ENCODE measurements at regions of chr1 and their contacts with region 1.

Region 1: DNA sequence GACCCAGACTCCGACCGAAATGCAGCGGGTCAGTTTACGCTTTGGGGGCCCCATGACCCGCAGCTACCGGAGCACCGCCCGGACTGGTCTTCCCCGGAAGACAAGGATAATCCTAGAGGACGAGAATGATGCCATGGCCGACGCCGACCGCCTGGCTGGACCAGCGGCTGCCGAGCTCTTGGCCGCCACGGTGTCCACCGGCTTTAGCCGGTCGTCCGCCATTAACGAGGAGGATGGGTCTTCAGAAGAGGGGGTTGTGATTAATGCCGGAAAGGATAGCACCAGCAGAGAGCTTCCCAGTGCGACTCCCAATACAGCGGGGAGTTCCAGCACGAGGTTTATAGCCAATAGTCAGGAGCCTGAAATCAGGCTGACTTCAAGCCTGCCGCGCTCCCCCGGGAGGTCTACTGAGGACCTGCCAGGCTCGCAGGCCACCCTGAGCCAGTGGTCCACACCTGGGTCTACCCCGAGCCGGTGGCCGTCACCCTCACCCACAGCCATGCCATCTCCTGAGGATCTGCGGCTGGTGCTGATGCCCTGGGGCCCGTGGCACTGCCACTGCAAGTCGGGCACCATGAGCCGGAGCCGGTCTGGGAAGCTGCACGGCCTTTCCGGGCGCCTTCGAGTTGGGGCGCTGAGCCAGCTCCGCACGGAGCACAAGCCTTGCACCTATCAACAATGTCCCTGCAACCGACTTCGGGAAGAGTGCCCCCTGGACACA is 534 bp downstream of the C1orf56 start:
- DNase-seq: peak; percentile 72 to 87 (median 85)
- H3K4me3 ChIP-seq: peak overlapping the region; percentile 56 to 92 (median 80)
- H3K27ac ChIP-seq: peak overlapping the region in 1 of 2 experiments; percentile 49
- H3K4me1 ChIP-seq: peaks cover 2 to 18% (median 9%) of the 10 kb centered on the region in 4 experiments
- H3K27me3 ChIP-seq: no peaks in the 10 kb centered on the region

Region 2: GRCh38 chr1:151036363-151036762 is 11.7 kb before region 1 on chr1 and contains the start of gene BNIPL:
- CTCF ChIA-PET with region 1: interaction called, 15 read pairs
- POLR2A ChIA-PET with region 1: no interaction called
- DNase-seq: no peak
- H3K4me3 ChIP-seq: no peak within 1 kb of the TSS
- H3K27ac ChIP-seq: no peak within 1 kb of the TSS
- H3K4me1 ChIP-seq: no peaks in the 10 kb centered on the region
- H3K27me3 ChIP-seq: no peaks in the 10 kb centered on the region

Region 3: DNA sequence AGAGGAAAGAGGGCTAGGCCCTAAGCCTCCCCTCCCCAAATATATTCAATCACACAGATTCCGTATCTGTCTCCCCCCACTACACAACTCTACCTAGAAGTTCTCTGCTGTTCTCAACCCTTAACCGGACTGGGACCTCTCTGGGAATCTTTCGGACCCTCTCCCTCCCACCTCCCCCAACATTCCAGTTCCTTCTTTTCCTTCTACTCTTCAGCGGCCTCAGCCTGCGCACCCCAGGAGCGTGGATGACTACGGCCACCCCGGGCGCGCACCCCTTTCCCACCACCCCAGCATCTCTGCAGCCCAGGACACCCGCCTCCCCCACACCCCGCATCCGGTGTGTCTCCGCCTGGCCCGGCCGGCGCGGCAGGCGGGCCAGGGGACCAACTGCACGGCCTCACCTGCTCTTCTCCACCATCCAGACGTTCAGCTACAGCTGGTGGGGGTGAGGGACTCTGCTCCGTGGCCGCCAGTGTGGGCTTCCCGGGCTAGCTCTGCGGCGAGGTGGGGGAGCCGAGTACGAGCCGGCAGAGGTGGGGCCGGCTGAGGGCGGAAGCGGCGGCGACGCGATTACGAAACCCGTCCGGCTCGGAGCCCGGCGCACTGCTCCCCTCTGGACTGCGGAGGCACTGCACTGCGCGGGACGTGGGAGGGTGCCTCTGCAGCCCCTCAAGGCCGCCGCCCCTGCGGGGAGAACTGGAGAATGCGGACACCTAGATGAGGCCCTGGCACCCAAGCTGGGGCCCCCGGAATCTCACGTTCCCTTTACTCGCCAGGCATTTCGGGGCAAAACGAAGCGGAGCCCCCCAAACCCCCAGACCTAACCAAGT is 11.2 kb after region 1 on chr1 and contains the start of gene CDC42SE1:
- CTCF ChIA-PET with region 1: interaction called, 59 read pairs
- POLR2A ChIA-PET with region 1: interaction called, 8 read pairs
- DNase-seq: peak; percentile 92 to 96 (median 94)
- H3K4me3 ChIP-seq: peak within 1 kb of the TSS; percentile 66 to 98 (median 95)
- H3K27ac ChIP-seq: peak within 1 kb of the TSS; percentile 79 to 93
- H3K4me1 ChIP-seq: peaks cover 18 to 60% (median 53%) of the 10 kb centered on the region in 4 experiments
- H3K27me3 ChIP-seq: no peaks in the 10 kb centered on the region

Region 4: GRCh38 chr1:151238467-151238739 is 190.3 kb after region 1 on chr1:
- CTCF ChIA-PET with region 1: no interaction called
- POLR2A ChIA-PET with region 1: no interaction called
- DNase-seq: no peak
- H3K4me3 ChIP-seq: no peak overlapping the region
- H3K27ac ChIP-seq: no peak overlapping the region
- H3K4me1 ChIP-seq: no peaks in the 10 kb centered on the region
- H3K27me3 ChIP-seq: no peaks in the 10 kb centered on the region